PC-9 (cell line): ENCODE measurements at regions of chr15 and their contacts with region 1.

Region 1: GRCh38 chr15:44536962-44537734 is at the start of gene EIF3J:
- DNase-seq: peak; percentile 82 to 95
- H3K4me3 ChIP-seq: peak within 1 kb of the TSS; percentile 91
- H3K27ac ChIP-seq: peak within 1 kb of the TSS; percentile 90
- H3K4me1 ChIP-seq: peaks cover 28% of the 10 kb centered on the region
- H3K27me3 ChIP-seq: no peaks in the 10 kb centered on the region
- CTCF ChIP-seq: no peak
- total RNA-seq, gene EIF3J: 75.8 and 117 TPM in 2 replicates

Region 2: GRCh38 chr15:44414001-44414400 is 123.1 kb before region 1 on chr15:
- CTCF ChIA-PET with region 1: no interaction called
- POLR2A ChIA-PET with region 1: no interaction called
- intact Hi-C with region 1: no loop called
- DNase-seq: no peak
- H3K4me3 ChIP-seq: no peak overlapping the region
- H3K27ac ChIP-seq: no peak overlapping the region
- H3K4me1 ChIP-seq: no peaks in the 10 kb centered on the region
- H3K27me3 ChIP-seq: no peaks in the 10 kb centered on the region
- CTCF ChIP-seq: no peak

Region 3: GRCh38 chr15:44426975-44427755 is 110.0 kb before region 1 on chr15 and contains the start of gene CTDSPL2:
- CTCF ChIA-PET with region 1: no interaction called
- POLR2A ChIA-PET with region 1: interaction called, 10 read pairs
- intact Hi-C with region 1: no loop called
- DNase-seq: peak; percentile 89 to 97
- H3K4me3 ChIP-seq: peak within 1 kb of the TSS; percentile 96
- H3K27ac ChIP-seq: peak within 1 kb of the TSS; percentile 95
- H3K4me1 ChIP-seq: peaks cover 13% of the 10 kb centered on the region; the same call in 1 of the 2 replicates
- H3K27me3 ChIP-seq: no peaks in the 10 kb centered on the region
- CTCF ChIP-seq: peak; percentile 35; the same call in 1 of the 2 replicates
- total RNA-seq, gene CTDSPL2: 31.5 and 55.0 TPM in 2 replicates

Region 4: GRCh38 chr15:44554934-44555723 is 18.0 kb after region 1 on chr15:
- CTCF ChIA-PET with region 1: no interaction called
- POLR2A ChIA-PET with region 1: interaction called, 10 read pairs
- intact Hi-C with region 1: no loop called
- DNase-seq: no peak
- H3K4me3 ChIP-seq: no peak overlapping the region
- H3K27ac ChIP-seq: no peak overlapping the region
- H3K4me1 ChIP-seq: peaks cover 34% of the 10 kb centered on the region
- H3K27me3 ChIP-seq: no peaks in the 10 kb centered on the region
- CTCF ChIP-seq: no peak

Region 5: GRCh38 chr15:45048794-45049631 is 511.9 kb after region 1 on chr15:
- CTCF ChIA-PET with region 1: no interaction called
- POLR2A ChIA-PET with region 1: interaction called, 33 read pairs
- intact Hi-C with region 1: no loop called
- DNase-seq: no peak
- H3K4me3 ChIP-seq: no peak overlapping the region
- H3K27ac ChIP-seq: no peak overlapping the region
- H3K4me1 ChIP-seq: no peaks in the 10 kb centered on the region
- H3K27me3 ChIP-seq: no peaks in the 10 kb centered on the region
- CTCF ChIP-seq: no peak